Activated CD8-positive, alpha-beta T cell treated with anti-CD3 and anti-CD28 coated beads for 36 hours (primary cell): ENCODE measurements at regions of chr7 and their contacts with region 1.

Region 1: DNA sequence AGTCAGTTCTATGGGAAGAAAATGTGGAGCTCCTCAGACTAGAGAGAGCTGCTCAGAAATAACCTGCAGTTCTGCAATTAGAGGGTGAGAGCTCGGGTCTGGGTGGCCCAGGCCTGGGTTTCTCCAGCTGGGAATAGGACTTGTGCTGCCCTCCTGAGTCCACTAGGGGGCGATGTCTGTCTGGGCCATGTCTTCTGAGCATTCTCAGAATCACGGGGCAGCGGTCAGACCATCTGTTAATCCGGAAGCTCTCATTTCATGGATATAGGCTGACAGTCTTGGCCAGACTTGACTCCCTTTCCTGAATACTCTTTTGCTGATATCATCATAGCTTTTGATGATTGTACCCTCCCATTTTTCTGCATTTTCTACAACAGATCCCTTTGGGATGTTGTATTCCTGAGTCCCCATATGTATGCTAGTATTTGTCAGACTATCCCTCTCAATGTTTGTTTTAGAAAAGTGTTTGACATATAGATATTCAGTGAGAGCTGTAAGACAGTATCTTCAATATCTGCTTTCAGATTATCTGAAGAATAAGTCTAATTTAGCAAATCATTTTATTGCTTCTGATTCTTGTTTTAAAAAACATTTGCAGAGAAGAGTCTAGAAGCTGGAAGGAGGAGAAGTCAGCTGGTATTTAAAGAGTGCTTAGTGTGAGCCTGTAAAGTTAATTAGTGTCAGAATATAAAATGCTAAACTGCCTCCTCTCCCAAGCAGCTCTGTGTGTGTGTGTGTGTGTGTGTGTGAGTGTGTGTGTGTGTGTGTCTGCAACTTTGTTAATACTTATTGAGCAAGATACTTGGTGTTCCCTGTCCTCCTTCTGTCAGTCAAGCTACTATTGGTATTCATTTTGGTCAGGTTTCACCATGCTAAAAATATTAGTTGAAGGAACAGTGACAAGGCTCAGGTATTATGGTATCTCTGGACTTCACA is 38.0 kb downstream of the STARD3NL start:
- DNase-seq: peak; percentile 90
- ATAC-seq: peak; percentile 75
- H3K4me3 Mint-ChIP-seq: no peak overlapping the region
- H3K27ac Mint-ChIP-seq: peak overlapping the region; percentile 47
- H3K4me1 Mint-ChIP-seq: peaks cover 40% of the 10 kb centered on the region
- H3K27me3 Mint-ChIP-seq: no peaks in the 10 kb centered on the region
- CTCF ChIP-seq: peak; percentile 97

Region 2: GRCh38 chr7:38107486-38107893 is 108.5 kb before region 1 on chr7:
- CTCF ChIA-PET with region 1: interaction called, 94 read pairs
- POLR2A ChIA-PET with region 1: no interaction called
- intact Hi-C with region 1: no loop called
- DNase-seq: peak; percentile 84
- ATAC-seq: peak; percentile 87
- H3K4me3 Mint-ChIP-seq: no peak overlapping the region
- H3K27ac Mint-ChIP-seq: no peak overlapping the region
- H3K4me1 Mint-ChIP-seq: peaks cover 2% of the 10 kb centered on the region
- H3K27me3 Mint-ChIP-seq: peaks cover 8% of the 10 kb centered on the region
- CTCF ChIP-seq: peak; percentile 86

Region 3: GRCh38 chr7:38186593-38187314 is 29.2 kb before region 1 on chr7:
- CTCF ChIA-PET with region 1: interaction called, 32 read pairs
- POLR2A ChIA-PET with region 1: no interaction called
- intact Hi-C with region 1: no loop called
- DNase-seq: no peak
- ATAC-seq: no peak
- H3K4me3 Mint-ChIP-seq: no peak overlapping the region
- H3K27ac Mint-ChIP-seq: no peak overlapping the region
- H3K4me1 Mint-ChIP-seq: peaks cover 42% of the 10 kb centered on the region
- H3K27me3 Mint-ChIP-seq: no peaks in the 10 kb centered on the region
- CTCF ChIP-seq: no peak

Region 4: GRCh38 chr7:38232502-38233366 is 16.7 kb after region 1 on chr7:
- CTCF ChIA-PET with region 1: interaction called, 70 read pairs
- POLR2A ChIA-PET with region 1: interaction called, 5 read pairs
- intact Hi-C with region 1: no loop called
- DNase-seq: peak; percentile 94
- ATAC-seq: peak; percentile 89
- H3K4me3 Mint-ChIP-seq: peak overlapping the region; percentile 43
- H3K27ac Mint-ChIP-seq: peak overlapping the region; percentile 90
- H3K4me1 Mint-ChIP-seq: peaks cover 77% of the 10 kb centered on the region
- H3K27me3 Mint-ChIP-seq: no peaks in the 10 kb centered on the region
- CTCF ChIP-seq: no peak

Region 5: DNA sequence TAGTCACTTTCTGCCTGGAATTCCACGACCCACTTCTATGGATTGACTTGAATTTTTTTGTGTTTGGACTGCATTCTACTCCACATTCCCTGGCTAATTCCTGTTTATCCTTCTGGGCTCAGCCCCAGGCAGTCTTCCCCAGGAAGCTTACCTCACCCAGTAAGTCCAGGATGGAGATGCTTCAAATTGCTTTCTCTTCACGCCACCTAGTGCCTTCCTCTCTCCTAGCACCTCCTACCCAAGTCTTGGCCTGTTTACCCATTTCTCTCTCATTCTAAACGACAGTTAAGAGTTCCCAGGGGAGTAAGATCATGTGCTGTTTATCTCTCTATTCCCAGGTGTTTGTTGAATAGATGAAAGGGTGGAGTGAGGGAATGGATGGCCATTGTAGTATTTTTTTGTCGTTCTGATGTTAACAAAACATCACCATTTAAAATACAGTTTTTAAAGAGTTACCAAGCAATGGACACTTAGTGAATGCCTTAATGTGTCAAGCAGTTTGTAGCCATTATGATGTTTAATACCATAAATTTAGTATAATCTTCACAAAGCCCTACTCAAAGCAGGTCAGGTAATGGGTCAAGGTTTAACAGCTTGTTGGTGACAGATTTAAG is 102.9 kb after region 1 on chr7:
- CTCF ChIA-PET with region 1: interaction called, 69 read pairs
- POLR2A ChIA-PET with region 1: interaction called, 6 read pairs
- intact Hi-C with region 1: no loop called
- DNase-seq: peak; percentile 46
- ATAC-seq: peak; percentile 66
- H3K4me3 Mint-ChIP-seq: peak overlapping the region; percentile 66
- H3K27ac Mint-ChIP-seq: peak overlapping the region; percentile 86
- H3K4me1 Mint-ChIP-seq: peaks cover 58% of the 10 kb centered on the region
- H3K27me3 Mint-ChIP-seq: no peaks in the 10 kb centered on the region
- CTCF ChIP-seq: peak; percentile 49

Region 6: GRCh38 chr7:38351601-38352000 is 135.6 kb after region 1 on chr7:
- CTCF ChIA-PET with region 1: interaction called, 49 read pairs
- POLR2A ChIA-PET with region 1: no interaction called
- intact Hi-C with region 1: no loop called
- DNase-seq: no peak
- ATAC-seq: no peak
- H3K4me3 Mint-ChIP-seq: peak overlapping the region; percentile 96
- H3K27ac Mint-ChIP-seq: peak overlapping the region; percentile 96
- H3K4me1 Mint-ChIP-seq: peaks cover 40% of the 10 kb centered on the region
- H3K27me3 Mint-ChIP-seq: no peaks in the 10 kb centered on the region
- CTCF ChIP-seq: no peak

Region 7: DNA sequence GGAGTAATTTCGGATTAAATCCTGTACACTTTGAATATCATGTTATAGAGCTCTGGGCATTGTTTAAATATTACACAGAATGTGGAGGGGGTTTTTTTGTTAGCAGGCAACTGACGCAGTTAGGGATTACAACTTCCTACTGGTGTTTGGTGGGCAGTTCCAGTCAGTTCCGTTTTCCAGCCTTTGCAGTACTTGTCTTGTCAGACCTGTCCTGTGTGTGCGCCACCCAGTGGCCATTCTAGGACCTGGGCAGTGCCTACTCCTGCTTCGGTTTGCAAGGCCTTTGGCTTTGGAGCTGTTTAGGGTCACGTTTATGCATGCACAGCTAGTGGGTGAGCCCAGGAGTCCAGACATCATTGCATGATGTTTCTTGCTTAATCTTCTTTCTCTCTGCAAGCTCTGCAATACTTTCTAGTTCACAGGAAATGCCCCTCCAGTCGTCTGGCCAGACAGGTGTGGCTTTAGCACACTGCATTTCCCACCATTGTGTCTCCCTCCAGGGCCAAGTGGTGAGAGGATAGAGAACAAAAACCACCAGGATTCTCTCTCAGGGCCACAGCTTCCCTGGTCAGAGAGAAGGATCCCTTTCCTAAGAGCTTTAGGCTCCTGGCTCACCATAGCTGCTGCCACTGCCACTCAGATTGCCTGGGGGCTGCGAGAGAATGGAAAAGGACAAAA is 154.0 kb after region 1 on chr7:
- CTCF ChIA-PET with region 1: interaction called, 247 read pairs
- POLR2A ChIA-PET with region 1: interaction called, 3 read pairs
- intact Hi-C with region 1: loop called (anchors 5 kb)
- DNase-seq: peak; percentile 94
- ATAC-seq: peak; percentile 78
- H3K4me3 Mint-ChIP-seq: no peak overlapping the region
- H3K27ac Mint-ChIP-seq: peak overlapping the region; percentile 73
- H3K4me1 Mint-ChIP-seq: peaks cover 61% of the 10 kb centered on the region
- H3K27me3 Mint-ChIP-seq: no peaks in the 10 kb centered on the region
- CTCF ChIP-seq: peak; percentile 83

Region 8: GRCh38 chr7:38893061-38893460 is 677.1 kb after region 1 on chr7:
- CTCF ChIA-PET with region 1: no interaction called
- POLR2A ChIA-PET with region 1: no interaction called
- intact Hi-C with region 1: no loop called
- DNase-seq: no peak
- ATAC-seq: no peak
- H3K4me3 Mint-ChIP-seq: no peak overlapping the region
- H3K27ac Mint-ChIP-seq: no peak overlapping the region
- H3K4me1 Mint-ChIP-seq: peaks cover 10% of the 10 kb centered on the region
- H3K27me3 Mint-ChIP-seq: no peaks in the 10 kb centered on the region
- CTCF ChIP-seq: no peak